Activated CD8-positive, alpha-beta T cell treated with anti-CD3 and anti-CD28 coated beads, Interleukin-2, amount 10 ng/mL, durations not matched to agents 7 days and 5 days (primary cell): ENCODE measurements at regions of chr18 and their contacts with region 1.

Region 1: DNA sequence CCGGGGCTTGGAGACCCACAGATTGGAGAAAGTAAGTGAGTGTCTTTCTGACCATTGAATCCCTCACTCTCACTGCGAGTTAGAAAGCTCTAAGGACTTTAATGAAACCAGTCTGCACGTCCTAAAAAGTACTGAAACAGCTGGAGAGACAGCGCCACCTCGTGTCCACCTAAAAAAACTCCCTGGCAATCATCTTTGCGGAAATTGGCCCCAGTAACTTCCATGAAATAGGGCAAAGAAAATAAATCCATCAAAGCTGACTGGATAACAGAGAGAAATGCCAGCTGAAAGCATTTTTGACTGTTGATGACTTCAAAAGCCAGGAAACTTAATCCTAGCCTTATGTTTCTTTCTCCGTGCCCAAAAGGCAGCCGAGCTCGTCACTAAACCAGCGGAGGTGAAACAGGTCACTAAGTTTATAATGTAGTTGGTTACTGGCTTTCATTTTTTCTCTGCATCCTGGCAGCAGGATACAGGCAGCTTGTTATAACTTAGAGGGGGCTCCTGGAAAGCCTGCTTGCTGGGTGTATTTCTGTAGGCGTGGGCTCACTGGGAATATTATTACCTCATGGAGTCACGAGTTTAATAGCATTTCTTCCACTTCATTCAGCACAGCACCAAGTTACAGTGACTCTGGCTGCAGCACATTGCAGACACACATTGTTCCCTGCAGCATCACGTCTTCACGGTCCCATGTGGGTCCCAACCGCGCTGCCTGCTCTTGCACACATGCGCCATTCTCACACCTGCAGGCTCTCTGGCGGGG is 266.5 kb downstream of the HRH4 start:
- DNase-seq: peak; percentile 71
- ATAC-seq: no peak
- H3K4me3 Mint-ChIP-seq: no peak overlapping the region
- H3K27ac Mint-ChIP-seq: no peak overlapping the region
- H3K4me1 Mint-ChIP-seq: peaks cover 1% of the 10 kb centered on the region
- H3K27me3 Mint-ChIP-seq: no peaks in the 10 kb centered on the region

Region 2: GRCh38 chr18:24600076-24600654 is 126.7 kb before region 1 on chr18:
- CTCF ChIA-PET with region 1: interaction called, 17 read pairs
- POLR2A ChIA-PET with region 1: no interaction called
- DNase-seq: no peak
- ATAC-seq: no peak
- H3K4me3 Mint-ChIP-seq: no peak overlapping the region
- H3K27ac Mint-ChIP-seq: no peak overlapping the region
- H3K4me1 Mint-ChIP-seq: no peaks in the 10 kb centered on the region
- H3K27me3 Mint-ChIP-seq: peaks cover 3% of the 10 kb centered on the region

Region 3: GRCh38 chr18:24846138-24846537 is 119.2 kb after region 1 on chr18:
- CTCF ChIA-PET with region 1: no interaction called
- POLR2A ChIA-PET with region 1: no interaction called
- DNase-seq: no peak
- ATAC-seq: no peak
- H3K4me3 Mint-ChIP-seq: no peak overlapping the region
- H3K27ac Mint-ChIP-seq: no peak overlapping the region
- H3K4me1 Mint-ChIP-seq: no peaks in the 10 kb centered on the region
- H3K27me3 Mint-ChIP-seq: no peaks in the 10 kb centered on the region

Region 4: GRCh38 chr18:24868760-24869237 is 141.9 kb after region 1 on chr18:
- CTCF ChIA-PET with region 1: no interaction called
- POLR2A ChIA-PET with region 1: no interaction called
- DNase-seq: no peak
- ATAC-seq: no peak
- H3K4me3 Mint-ChIP-seq: no peak overlapping the region
- H3K27ac Mint-ChIP-seq: no peak overlapping the region
- H3K4me1 Mint-ChIP-seq: no peaks in the 10 kb centered on the region
- H3K27me3 Mint-ChIP-seq: no peaks in the 10 kb centered on the region